HEK293T (cell line): ENCODE measurements at regions of chr1 and their contacts with region 1.

Region 1: GRCh38 chr1:39105061-39105840 is 79.1 kb downstream of the NDUFS5 start:
- DNase-seq: peak; percentile 58

Region 2: GRCh38 chr1:39061951-39062350 is 43.3 kb before region 1 on chr1:
- CTCF ChIA-PET with region 1: no interaction called
- POLR2A ChIA-PET with region 1: no interaction called
- DNase-seq: no peak

Region 3: GRCh38 chr1:39132505-39133339 is 27.5 kb after region 1 on chr1:
- CTCF ChIA-PET with region 1: no interaction called
- POLR2A ChIA-PET with region 1: interaction called, 12 read pairs
- DNase-seq: no peak

Region 4: DNA sequence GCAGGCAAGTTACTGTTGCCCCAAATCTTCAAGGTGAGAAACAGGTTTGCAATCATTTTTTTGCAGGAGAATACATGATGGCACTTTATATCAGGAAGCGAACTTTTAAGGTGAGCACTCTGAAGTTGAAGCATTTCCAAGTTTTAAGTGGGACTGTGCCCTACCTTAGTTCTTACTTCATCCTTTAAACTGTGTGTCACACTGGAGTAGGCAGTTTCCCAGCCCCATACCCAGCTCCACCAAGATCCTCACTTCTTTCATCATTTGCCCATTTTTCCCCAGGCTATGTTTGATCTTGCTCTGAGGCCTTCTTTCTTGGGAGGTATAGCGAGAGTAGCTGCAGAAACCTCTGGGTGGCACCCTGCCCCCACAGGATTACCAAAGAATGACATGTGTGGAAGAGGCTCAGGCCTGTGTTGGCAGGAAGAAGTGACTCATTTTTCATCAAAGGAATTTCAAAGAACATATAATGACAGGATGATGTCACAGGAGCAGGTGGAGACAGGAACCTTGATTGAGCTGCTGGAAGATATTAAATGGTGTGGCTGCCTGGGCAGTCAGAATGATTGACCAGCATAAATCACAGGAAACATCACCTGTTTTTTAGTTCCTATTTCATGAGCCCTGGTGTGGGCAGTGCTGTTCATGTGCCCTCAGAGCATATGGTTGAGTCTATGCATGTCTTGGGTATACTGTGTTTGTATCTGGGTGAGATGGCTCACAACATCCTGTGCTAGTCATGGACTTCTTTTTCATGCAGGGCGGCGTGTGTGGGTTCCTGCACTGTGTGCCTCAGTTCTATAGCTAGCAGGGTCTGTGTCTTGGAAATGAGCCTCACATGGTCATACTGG is 78.5 kb after region 1 on chr1:
- CTCF ChIA-PET with region 1: interaction called, 14 read pairs
- POLR2A ChIA-PET with region 1: interaction called, 4 read pairs
- DNase-seq: peak; percentile 63

Region 5: GRCh38 chr1:39189592-39190041 is 84.4 kb after region 1 on chr1:
- CTCF ChIA-PET with region 1: interaction called, 30 read pairs
- POLR2A ChIA-PET with region 1: interaction called, 14 read pairs
- DNase-seq: no peak

Region 6: DNA sequence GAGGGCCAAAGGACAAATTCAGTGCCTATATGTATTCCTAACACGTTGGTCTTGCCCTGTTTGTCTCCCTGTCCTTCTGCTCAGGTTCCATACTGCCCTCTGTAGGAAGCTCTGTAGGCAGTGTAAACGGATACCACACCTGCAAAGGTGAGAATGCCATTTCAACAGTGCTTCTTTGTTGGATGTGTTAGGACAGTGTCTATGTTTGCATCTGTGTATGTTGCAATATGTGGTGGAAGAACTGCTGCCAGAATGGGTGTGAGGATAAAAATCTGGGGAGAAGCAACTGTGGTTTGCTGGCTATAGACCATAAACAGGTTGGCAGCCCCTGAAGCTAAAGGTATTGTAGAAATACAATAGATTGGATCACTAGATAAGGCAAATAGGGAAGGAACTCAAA is 273.1 kb after region 1 on chr1:
- CTCF ChIA-PET with region 1: no interaction called
- POLR2A ChIA-PET with region 1: no interaction called
- DNase-seq: peak; percentile 25